Naive thymus-derived CD4-positive, alpha-beta T cell (primary cell): ENCODE measurements at regions of chr1 and their contacts with region 1.

Region 1: DNA sequence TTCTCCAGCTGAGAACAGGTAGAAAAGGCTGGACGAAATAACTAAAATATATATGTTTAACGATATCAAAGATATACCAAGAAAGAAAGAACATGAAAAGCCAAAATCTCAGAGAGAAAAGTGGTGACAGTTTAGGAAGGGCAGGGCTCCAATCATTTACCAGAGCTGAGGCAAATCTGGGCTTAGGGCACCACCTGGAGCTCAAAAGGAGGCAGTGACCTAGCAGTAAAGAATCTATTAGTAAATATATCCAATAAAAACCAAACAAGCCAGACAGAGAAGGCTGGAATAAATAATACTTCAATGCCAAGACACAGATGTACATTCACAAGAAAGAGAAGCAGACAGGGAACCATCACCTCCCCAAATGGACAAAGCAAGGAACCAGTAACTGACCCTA is 43.5 kb downstream of the CHIA start:
- DNase-seq: peak in 7 of 9 donors; percentile 60 to 78 (median 66)
- ATAC-seq: peak; percentile 83
- H3K4me3 ChIP-seq: no peak overlapping the region
- H3K4me3 Mint-ChIP-seq: no peak overlapping the region
- H3K27ac ChIP-seq: no peak overlapping the region
- H3K27ac Mint-ChIP-seq: peak overlapping the region in 1 of 9 donors; percentile 29
- H3K4me1 ChIP-seq: peaks cover 0 to 7% of the 10 kb centered on the region in 2 donors
- H3K4me1 Mint-ChIP-seq: peaks cover 3 to 14% (median 6%) of the 10 kb centered on the region in 7 donors
- H3K27me3 ChIP-seq: no peaks in the 10 kb centered on the region
- H3K27me3 Mint-ChIP-seq: peaks cover 0 to 2% (median 0%) of the 10 kb centered on the region in 5 donors

Region 2: GRCh38 chr1:111030590-111030989 is 303.6 kb before region 1 on chr1:
- CTCF ChIA-PET with region 1: interaction called, 17 read pairs
- POLR2A ChIA-PET with region 1: no interaction called
- intact Hi-C with region 1: loop called (anchors 1 kb)
- DNase-seq: peak in 8 of 9 donors; percentile 20 to 69 (median 56)
- ATAC-seq: peak; percentile 66
- H3K4me3 ChIP-seq: no peak overlapping the region
- H3K4me3 Mint-ChIP-seq: no peak overlapping the region
- H3K27ac ChIP-seq: no peak overlapping the region
- H3K27ac Mint-ChIP-seq: peak overlapping the region in 2 of 9 donors; percentile 3 to 22
- H3K4me1 ChIP-seq: no peaks in the 10 kb centered on the region
- H3K4me1 Mint-ChIP-seq: peaks cover 0 to 5% (median 0%) of the 10 kb centered on the region in 7 donors
- H3K27me3 ChIP-seq: no peaks in the 10 kb centered on the region
- H3K27me3 Mint-ChIP-seq: peaks cover 0 to 28% (median 13%) of the 10 kb centered on the region in 5 donors

Region 3: DNA sequence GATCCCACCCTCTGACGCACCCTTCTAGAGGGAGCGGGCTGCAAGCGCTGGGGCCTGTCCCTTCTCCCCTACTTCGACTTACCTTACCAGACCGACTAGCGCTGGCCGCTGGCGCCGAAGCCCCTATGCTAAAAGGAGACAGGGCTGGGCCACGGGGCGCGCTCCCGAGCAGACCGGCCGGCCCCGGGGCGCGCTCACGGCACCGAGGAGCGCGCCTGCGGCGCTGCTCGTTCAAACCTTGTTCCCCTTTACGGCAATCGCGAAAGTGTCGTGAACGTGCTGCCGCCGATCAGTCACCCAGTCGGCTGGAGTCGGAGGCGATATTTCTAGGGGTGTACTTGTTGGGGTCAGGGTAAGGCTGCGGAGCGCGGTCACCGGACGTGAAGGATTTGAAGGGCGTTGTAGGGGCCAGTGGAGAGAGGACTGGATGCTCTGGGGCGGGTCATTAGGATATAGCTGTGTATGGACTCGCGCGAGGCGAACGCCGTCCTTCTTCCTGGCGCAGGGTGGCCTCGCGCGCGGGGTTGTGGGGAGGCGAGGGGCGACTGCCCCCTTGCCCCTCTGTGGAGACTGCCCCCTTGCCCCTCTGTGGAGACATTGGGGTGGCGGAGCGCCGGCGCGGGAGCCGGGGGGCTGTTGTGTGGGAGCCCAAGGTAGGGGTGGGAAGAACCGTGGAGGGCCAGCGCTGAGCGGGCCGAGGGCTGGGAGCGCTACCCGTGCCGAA is 194.1 kb before region 1 on chr1 and contains the starts of genes CEPT1 and DRAM2:
- CTCF ChIA-PET with region 1: interaction called, 6 read pairs
- POLR2A ChIA-PET with region 1: interaction called, 5 read pairs
- intact Hi-C with region 1: loop called in 1 of 2 experiments (anchors 5 kb)
- DNase-seq: peak; percentile 77 to 93 (median 89)
- ATAC-seq: peak; percentile 95
- H3K4me3 ChIP-seq: peak within 1 kb of the TSS; percentile 91
- H3K4me3 Mint-ChIP-seq: peak within 1 kb of the TSS; percentile 87 to 100 (median 98)
- H3K27ac ChIP-seq: peak within 1 kb of the TSS; percentile 93
- H3K27ac Mint-ChIP-seq: peak within 1 kb of the TSS; percentile 91 to 100 (median 97)
- H3K4me1 ChIP-seq: peaks cover 18 to 22% of the 10 kb centered on the region in 2 donors
- H3K4me1 Mint-ChIP-seq: peaks cover 40 to 75% (median 57%) of the 10 kb centered on the region in 7 donors
- H3K27me3 ChIP-seq: no peaks in the 10 kb centered on the region
- H3K27me3 Mint-ChIP-seq: no peaks in the 10 kb centered on the region
- total RNA-seq, gene CEPT1: 39.1 to 57.5 (median 40.2) TPM
- total RNA-seq, gene DRAM2: 26.9 to 51.6 (median 43.5) TPM

Region 4: DNA sequence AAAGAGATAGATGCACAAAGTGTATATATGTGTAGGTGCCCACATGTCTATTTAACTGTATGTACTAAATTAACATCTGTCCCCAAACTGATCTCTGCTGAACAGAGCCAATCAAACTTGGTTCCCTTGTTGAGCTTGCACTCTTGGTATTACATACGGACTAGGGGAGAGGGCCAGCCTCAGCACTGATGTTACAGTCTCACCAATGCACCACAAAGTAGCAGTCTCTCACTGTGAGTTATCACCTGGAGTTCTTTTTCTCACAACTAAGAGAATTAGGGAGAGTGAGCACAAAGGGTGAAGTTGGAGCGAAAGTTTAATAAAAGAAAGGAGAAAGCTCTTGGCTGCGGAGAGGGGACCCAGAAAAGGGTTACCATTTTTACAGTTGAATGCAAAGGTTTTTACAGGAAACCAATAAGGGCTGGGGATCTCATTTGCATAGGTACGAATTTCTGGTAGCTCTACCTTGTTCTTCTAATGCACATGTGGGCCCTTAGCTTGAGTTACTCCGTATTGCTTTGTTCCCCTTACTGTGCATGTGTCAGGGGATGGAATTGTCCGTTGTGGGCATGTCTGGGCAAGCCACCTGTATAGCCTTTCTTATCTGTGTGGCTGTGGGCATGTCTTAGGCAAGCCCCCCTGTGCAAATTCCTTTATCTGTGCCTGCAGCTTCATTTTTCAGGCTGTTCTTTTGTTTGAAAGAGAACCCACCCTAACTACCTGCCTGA is 119.9 kb before region 1 on chr1:
- CTCF ChIA-PET with region 1: interaction called, 77 read pairs
- POLR2A ChIA-PET with region 1: interaction called, 15 read pairs
- intact Hi-C with region 1: no loop called
- DNase-seq: no peak
- ATAC-seq: no peak
- H3K4me3 ChIP-seq: peak overlapping the region; percentile 12
- H3K4me3 Mint-ChIP-seq: peak overlapping the region; percentile 60 to 88 (median 81)
- H3K27ac ChIP-seq: peak overlapping the region; percentile 75
- H3K27ac Mint-ChIP-seq: peak overlapping the region; percentile 94 to 100 (median 97)
- H3K4me1 ChIP-seq: peaks cover 65 to 67% of the 10 kb centered on the region in 2 donors
- H3K4me1 Mint-ChIP-seq: peaks cover 66 to 98% (median 93%) of the 10 kb centered on the region in 7 donors
- H3K27me3 ChIP-seq: no peaks in the 10 kb centered on the region
- H3K27me3 Mint-ChIP-seq: peaks cover 0 to 2% (median 0%) of the 10 kb centered on the region in 5 donors

Region 5: DNA sequence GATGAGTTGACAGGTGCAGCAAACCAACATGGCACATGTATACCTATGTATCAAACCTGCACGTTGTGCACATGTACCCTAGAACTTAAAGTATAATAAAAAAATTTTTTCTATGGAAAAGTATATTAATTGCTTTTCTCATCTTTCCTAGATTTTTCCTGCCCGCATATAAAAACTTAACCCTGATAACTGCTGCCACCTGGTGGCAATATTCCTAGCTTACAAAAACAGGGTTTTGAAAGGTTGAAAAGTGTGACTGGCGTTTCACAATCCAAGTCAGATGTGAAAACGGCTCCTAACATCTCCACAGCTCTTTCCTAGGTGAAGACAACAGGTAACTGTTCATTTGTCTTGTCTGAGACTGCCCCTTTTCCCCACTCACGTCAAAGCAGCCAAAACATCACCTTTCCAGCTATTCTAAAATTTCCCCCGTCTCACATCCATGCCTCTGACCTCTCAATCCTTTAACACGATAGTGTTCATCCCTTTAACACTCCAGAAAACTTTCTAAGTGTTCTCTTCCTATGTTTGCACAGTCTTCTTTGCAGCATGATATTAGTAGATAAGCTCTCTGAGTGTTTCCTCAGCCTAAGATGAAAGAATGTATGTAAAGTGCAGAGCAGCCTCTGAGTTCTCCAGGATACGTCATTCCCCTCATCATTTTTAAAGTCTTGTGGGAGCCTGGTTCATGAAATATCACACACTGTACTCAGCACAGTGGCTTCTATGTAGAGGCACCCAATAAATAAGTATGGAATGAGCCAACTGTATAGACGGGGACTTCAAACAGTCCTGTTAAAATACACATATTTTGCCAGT is 65.8 kb after region 1 on chr1:
- CTCF ChIA-PET with region 1: no interaction called
- POLR2A ChIA-PET with region 1: no interaction called
- intact Hi-C with region 1: loop called in 1 of 2 experiments (anchors 1 kb)
- DNase-seq: peak in 6 of 9 donors; percentile 19 to 43 (median 32)
- ATAC-seq: no peak
- H3K4me3 ChIP-seq: no peak overlapping the region
- H3K4me3 Mint-ChIP-seq: peak overlapping the region in 1 of 10 donors; percentile 35
- H3K27ac ChIP-seq: no peak overlapping the region
- H3K27ac Mint-ChIP-seq: peak overlapping the region in 1 of 9 donors; percentile 46
- H3K4me1 ChIP-seq: no peaks in the 10 kb centered on the region
- H3K4me1 Mint-ChIP-seq: peaks cover 3 to 17% (median 13%) of the 10 kb centered on the region in 7 donors
- H3K27me3 ChIP-seq: no peaks in the 10 kb centered on the region
- H3K27me3 Mint-ChIP-seq: peaks cover 0 to 64% (median 0%) of the 10 kb centered on the region in 5 donors